ENCODE measurements at regions of chr15 and their contacts with region 1.

Region 1: GRCh38 chr15:84721371-84721770 is 5.4 kb upstream of the SEC11A start:
- DNase-seq: no peak
- ATAC-seq: no peak
- H3K4me3 ChIP-seq: no peak overlapping the region
- H3K27ac ChIP-seq: peak overlapping the region in 1 of 10 donors; percentile 76
- H3K4me1 ChIP-seq: peaks cover 0 to 51% (median 17%) of the 10 kb centered on the region in 9 donors
- H3K27me3 ChIP-seq: no peaks in the 10 kb centered on the region
- CTCF ChIP-seq: no peak

Region 2: DNA sequence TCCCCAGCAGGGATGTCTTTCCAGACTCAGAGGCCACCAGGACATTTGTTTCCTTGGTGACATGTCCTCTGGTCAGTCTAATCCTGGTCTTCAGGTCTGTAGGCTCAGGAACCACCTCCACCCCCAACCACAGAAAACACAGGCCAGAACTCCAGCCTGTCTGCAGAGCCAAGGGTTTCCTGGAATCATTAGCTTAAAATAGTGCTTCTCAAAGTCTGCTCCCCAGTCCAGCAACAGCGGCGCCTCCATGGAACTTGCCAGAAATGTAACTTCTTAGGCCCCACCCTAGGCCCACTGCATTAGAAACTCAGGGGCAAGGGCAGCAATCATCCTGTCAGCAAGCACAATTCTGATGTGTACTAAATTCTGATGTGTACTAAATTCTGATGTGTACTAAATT is 183.0 kb after region 1 on chr15:
- intact Hi-C with region 1: no loop called
- DNase-seq: peak in 1 of 2 donors; percentile 51
- ATAC-seq: peak; percentile 76 to 91 (median 84)
- H3K4me3 ChIP-seq: no peak overlapping the region
- H3K27ac ChIP-seq: peak overlapping the region; percentile 30 to 91 (median 70)
- H3K4me1 ChIP-seq: peaks cover 6 to 44% (median 21%) of the 10 kb centered on the region in 9 donors
- H3K27me3 ChIP-seq: no peaks in the 10 kb centered on the region
- CTCF ChIP-seq: no peak

Region 3: DNA sequence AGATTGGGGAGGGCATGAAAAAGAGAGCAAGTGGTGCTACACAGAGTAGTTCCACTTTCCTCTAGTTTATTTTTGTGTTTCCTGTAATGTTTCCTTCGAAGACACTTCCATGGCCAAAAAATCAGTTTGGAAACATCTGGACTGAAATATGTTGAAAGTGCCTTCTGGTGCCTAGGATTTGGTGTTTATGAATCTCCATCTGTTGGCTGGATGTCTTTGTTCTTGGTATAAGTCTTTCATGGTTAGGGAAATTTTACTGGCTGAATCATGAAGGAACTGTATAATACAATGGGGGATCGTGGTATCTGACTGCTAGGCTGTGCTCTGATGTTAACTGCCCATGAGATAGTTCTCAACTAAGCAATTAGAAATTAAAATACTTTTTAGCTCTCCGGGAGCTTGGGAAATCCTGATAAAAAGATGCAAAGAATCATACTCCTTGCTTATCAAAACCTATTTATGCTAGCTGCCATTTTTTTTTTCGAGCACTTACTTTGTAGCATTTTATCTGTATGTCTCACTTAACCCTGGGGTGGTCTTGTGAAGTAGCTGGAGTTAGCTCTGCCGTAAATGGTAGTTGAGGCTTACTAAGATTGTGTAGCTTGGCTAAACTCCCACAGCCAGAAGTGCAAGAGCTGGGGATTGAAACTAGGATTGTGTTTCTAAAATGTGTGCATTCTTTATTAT is 681.0 kb after region 1 on chr15:
- intact Hi-C with region 1: loop called in 1 of 10 experiments (anchors 5 kb)
- DNase-seq: no peak
- ATAC-seq: peak in 6 of 8 donors; percentile 23 to 36 (median 31)
- H3K4me3 ChIP-seq: no peak overlapping the region
- H3K27ac ChIP-seq: peak overlapping the region in 8 of 10 donors; percentile 0 to 57 (median 27)
- H3K4me1 ChIP-seq: peaks cover 15 to 96% (median 75%) of the 10 kb centered on the region in 9 donors
- H3K27me3 ChIP-seq: no peaks in the 10 kb centered on the region
- CTCF ChIP-seq: no peak

Measured in heart right ventricle (tissue), 16 donors.